Panc1 (cell line): ENCODE measurements at regions of chr3 and their contacts with region 1.

Region 1: GRCh38 chr3:112687211-112687610 is 46.3 kb upstream of the CCDC80 start:
- DNase-seq: no peak
- ATAC-seq: no peak
- H3K4me3 ChIP-seq: no peak overlapping the region
- H3K27ac ChIP-seq: no peak overlapping the region
- H3K4me1 ChIP-seq: no peaks in the 10 kb centered on the region
- H3K27me3 ChIP-seq: no peaks in the 10 kb centered on the region
- CTCF ChIP-seq: no peak

Region 2: GRCh38 chr3:113035387-113035982 is 348.3 kb after region 1 on chr3:
- CTCF ChIA-PET with region 1: interaction called, 12 read pairs
- POLR2A ChIA-PET with region 1: no interaction called
- in situ Hi-C with region 1: no loop called
- intact Hi-C with region 1: no loop called
- DNase-seq: peak; percentile 42
- ATAC-seq: peak; percentile 97
- H3K4me3 ChIP-seq: no peak overlapping the region
- H3K27ac ChIP-seq: no peak overlapping the region
- H3K4me1 ChIP-seq: no peaks in the 10 kb centered on the region
- H3K27me3 ChIP-seq: peaks cover 4% of the 10 kb centered on the region; the same call in 1 of the 2 replicates
- CTCF ChIP-seq: peak; percentile 94